ENCODE measurements at regions of chr12 and their contacts with region 1.

Region 1: DNA sequence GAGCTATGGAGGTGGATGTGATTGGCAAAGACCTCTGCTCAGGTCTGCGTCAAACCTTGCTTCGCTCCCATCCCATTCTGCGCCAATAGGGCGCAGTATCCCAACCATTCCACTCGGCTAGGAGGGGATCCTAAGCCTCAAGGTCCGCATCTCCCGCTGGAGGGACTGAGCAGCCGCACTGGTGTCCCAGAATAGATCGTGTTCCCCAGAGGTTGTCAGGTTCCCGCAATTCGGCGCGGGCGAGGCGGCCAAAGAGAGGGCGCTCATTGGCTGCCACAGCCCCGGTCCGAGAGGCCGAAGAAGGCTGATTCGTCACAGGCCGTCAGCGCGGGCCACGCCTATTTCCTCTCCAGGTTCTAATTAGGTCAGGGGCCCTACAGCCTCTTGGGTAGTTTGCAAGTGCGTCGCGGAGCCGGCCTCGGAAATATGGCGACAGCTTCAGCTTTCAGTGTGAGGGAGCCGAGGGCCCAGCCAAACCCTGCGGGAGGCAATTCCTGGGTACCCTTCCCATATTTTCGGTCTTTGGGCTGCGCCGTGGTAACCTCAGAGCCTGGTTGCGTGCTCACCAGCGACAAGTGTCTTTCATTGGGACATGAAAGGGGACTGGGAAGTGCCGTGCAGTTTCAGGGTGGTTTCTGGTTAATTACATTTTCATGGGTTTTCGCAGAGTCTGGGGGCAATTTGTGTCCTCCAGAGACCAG is 5.0 kb downstream of the OR10AD1 start:
- DNase-seq: peak; percentile 97
- H3K4me3 Mint-ChIP-seq: peak overlapping the region; percentile 86
- H3K27ac Mint-ChIP-seq: peak overlapping the region; percentile 99
- H3K4me1 Mint-ChIP-seq: peaks cover 31% of the 10 kb centered on the region
- H3K27me3 Mint-ChIP-seq: peaks cover 5% of the 10 kb centered on the region

Region 2: DNA sequence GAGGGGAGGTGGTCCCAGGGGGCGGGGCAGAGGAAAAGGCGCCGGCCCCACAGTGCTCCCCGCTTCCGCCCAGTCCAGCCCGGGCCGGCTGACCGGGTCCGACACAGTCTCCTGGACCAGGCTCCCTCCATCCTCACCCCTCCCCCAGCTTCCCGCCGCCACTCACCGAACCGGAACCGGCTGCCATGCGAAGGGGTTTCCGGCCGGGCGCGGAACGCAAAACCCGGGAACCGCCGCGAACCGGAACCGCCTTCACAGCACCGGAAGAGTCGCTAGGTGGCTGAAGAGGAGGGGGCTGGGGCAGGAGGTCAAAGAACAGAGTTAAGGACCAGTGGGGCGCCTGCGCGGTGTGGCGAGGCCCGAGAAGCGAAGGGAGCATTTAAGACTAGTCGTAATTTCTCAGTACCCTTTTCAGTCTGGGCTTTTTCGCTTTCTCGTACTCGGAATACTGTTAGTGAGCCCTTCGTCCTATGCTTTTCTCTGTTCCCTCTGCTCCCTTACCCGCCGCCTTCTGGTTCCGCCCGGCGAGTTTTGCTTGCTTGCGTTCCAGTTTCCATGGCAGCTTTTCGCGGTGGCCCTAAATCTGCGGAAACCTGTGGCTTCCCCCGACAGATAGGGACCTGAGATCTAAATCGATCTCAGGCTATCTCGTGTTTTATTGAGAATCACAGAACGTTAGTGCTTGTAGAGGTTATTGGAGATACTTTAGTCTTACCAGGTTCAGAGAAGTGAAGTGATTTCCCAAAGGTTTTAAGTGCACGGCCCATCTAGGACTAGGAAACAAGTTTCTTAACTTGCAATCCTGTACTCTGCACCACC is 92.0 kb before region 1 on chr12 and contains the start of gene SENP1:
- CTCF ChIA-PET with region 1: interaction called, 7 read pairs
- POLR2A ChIA-PET with region 1: interaction called, 7 read pairs
- intact Hi-C with region 1: loop called (anchors 1 kb)
- DNase-seq: peak; percentile 94
- H3K4me3 Mint-ChIP-seq: peak within 1 kb of the TSS; percentile 86
- H3K27ac Mint-ChIP-seq: peak within 1 kb of the TSS; percentile 94
- H3K4me1 Mint-ChIP-seq: peaks cover 47% of the 10 kb centered on the region
- H3K27me3 Mint-ChIP-seq: no peaks in the 10 kb centered on the region
- total RNA-seq, gene SENP1: 37.7 to 41.6 TPM

Region 3: DNA sequence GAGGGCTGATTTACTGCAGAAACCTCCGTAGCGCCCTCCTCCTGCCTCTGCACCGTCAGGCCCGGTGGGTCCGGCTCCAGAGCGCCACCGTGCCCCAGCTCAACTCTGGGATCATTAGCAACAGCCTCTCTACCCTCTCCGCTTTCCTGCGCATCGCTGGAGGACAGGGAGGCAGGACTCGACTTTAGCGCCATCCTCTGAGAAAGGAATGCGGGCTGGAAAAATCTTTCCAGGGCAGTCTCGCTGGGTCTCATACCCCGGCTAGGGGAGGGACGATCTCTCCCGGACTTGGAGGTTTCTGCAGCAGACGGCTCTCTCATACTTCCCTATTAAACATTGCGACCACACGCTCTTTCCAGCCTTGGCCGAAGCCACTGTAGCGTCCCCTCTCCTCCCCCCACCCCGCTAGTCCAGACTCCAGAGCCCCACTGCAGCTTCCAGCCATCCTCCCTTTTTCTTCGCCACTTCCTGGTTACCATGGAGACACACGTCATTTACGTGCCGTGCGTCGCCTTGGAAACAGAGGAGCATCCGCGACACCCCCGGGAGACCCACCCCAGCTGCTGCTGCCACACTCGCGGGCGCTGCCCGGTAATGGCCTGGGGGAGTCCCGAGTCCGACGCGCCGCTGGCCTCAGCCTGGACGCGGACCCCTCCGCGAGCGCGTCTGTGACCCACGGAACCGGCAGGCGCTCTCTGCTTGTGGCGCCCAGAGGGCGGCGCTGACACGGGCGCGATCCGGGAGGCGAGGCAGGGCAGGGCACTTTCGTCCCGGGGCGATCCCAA is 14.8 kb before region 1 on chr12 and contains the start of gene CCDC184:
- CTCF ChIA-PET with region 1: interaction called, 65 read pairs
- POLR2A ChIA-PET with region 1: interaction called, 11 read pairs
- intact Hi-C with region 1: loop called (anchors 1 kb)
- DNase-seq: peak; percentile 82
- H3K4me3 Mint-ChIP-seq: peak within 1 kb of the TSS; percentile 92
- H3K27ac Mint-ChIP-seq: no peak within 1 kb of the TSS
- H3K4me1 Mint-ChIP-seq: peaks cover 19% of the 10 kb centered on the region
- H3K27me3 Mint-ChIP-seq: peaks cover 24% of the 10 kb centered on the region
- total RNA-seq, gene CCDC184: 0.36 to 0.40 TPM

Region 4: GRCh38 chr12:48280572-48280971 is 82.5 kb after region 1 on chr12:
- CTCF ChIA-PET with region 1: no interaction called
- POLR2A ChIA-PET with region 1: no interaction called
- intact Hi-C with region 1: no loop called
- DNase-seq: no peak
- H3K4me3 Mint-ChIP-seq: no peak overlapping the region
- H3K27ac Mint-ChIP-seq: no peak overlapping the region
- H3K4me1 Mint-ChIP-seq: peaks cover under 1% of the 10 kb centered on the region
- H3K27me3 Mint-ChIP-seq: peaks cover 9% of the 10 kb centered on the region

Region 5: DNA sequence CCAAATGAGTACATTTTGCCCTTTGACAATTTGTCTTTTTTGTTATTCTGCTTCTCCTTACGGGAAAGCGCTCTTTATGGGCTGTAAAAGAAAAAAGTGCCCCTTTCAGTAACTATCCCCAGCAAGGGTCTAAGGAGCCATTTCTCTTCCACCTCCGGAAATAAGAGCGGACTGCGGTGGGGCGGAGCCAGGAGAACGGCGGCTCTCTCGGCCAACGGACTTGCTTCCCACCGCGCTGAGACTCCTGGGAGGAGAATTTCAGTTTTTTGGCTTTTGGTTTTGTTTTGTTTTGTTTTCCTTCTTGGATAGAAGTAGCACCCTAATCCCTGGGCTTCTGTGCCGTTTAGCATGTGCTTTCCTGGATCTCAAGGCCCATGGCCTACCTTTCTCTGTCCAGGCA is 109.1 kb after region 1 on chr12:
- CTCF ChIA-PET with region 1: no interaction called
- POLR2A ChIA-PET with region 1: no interaction called
- intact Hi-C with region 1: no loop called
- DNase-seq: no peak
- H3K4me3 Mint-ChIP-seq: no peak overlapping the region
- H3K27ac Mint-ChIP-seq: no peak overlapping the region
- H3K4me1 Mint-ChIP-seq: no peaks in the 10 kb centered on the region
- H3K27me3 Mint-ChIP-seq: no peaks in the 10 kb centered on the region

Region 6: GRCh38 chr12:48618541-48618940 is 420.4 kb after region 1 on chr12:
- CTCF ChIA-PET with region 1: interaction called, 39 read pairs
- POLR2A ChIA-PET with region 1: no interaction called
- intact Hi-C with region 1: loop called (anchors 5 kb)
- DNase-seq: peak; percentile 83
- H3K4me3 Mint-ChIP-seq: no peak overlapping the region
- H3K27ac Mint-ChIP-seq: no peak overlapping the region
- H3K4me1 Mint-ChIP-seq: no peaks in the 10 kb centered on the region
- H3K27me3 Mint-ChIP-seq: peaks cover 22% of the 10 kb centered on the region

Region 7: GRCh38 chr12:48716493-48717251 is 518.6 kb after region 1 on chr12 and contains the start of gene CCNT1:
- CTCF ChIA-PET with region 1: no interaction called
- POLR2A ChIA-PET with region 1: no interaction called
- intact Hi-C with region 1: loop called (anchors 5 kb)
- DNase-seq: peak; percentile 100
- H3K4me3 Mint-ChIP-seq: peak within 1 kb of the TSS; percentile 98
- H3K27ac Mint-ChIP-seq: peak within 1 kb of the TSS; percentile 99
- H3K4me1 Mint-ChIP-seq: peaks cover 39% of the 10 kb centered on the region
- H3K27me3 Mint-ChIP-seq: no peaks in the 10 kb centered on the region
- total RNA-seq, gene CCNT1: 66.2 to 73.3 TPM